Activated CD4-positive, alpha-beta T cell treated with anti-CD3 and anti-CD28 coated beads for 36 hours (primary cell): ENCODE measurements at regions of chr11 and their contacts with region 1.

Region 1: DNA sequence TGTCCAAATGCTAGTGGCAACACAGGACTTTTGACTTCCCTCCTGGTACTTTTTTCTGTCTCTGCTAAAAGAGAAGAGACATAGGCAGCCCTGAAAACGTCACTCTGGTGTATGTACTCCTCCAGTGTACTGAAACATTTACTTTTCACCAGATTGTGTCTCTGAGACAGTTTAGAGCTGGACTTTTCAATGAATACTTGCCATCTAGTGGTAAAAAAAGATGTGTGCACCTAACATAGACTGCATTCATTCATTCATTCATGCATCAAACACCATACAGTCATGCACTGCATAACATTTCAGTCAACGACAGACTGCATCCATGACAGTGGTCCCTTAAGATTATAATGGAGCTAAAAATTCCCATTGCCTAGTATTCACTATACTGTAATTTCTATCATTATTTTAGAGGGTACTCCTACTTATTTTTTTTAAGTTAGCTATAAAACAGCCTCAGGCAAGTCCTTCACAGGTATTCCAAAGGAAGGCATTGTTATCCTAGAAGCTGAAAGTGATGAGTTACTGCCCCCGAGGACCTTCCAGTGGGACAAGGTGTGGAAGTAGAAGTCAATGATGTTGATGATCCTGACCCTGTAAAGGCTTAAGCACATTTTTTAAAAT is 186.2 kb downstream of the SPON1 start:
- DNase-seq: no peak
- ATAC-seq: peak; percentile 63
- H3K4me3 Mint-ChIP-seq: no peak overlapping the region
- H3K27ac Mint-ChIP-seq: no peak overlapping the region
- H3K4me1 Mint-ChIP-seq: peaks cover 10% of the 10 kb centered on the region
- H3K27me3 Mint-ChIP-seq: no peaks in the 10 kb centered on the region

Region 2: DNA sequence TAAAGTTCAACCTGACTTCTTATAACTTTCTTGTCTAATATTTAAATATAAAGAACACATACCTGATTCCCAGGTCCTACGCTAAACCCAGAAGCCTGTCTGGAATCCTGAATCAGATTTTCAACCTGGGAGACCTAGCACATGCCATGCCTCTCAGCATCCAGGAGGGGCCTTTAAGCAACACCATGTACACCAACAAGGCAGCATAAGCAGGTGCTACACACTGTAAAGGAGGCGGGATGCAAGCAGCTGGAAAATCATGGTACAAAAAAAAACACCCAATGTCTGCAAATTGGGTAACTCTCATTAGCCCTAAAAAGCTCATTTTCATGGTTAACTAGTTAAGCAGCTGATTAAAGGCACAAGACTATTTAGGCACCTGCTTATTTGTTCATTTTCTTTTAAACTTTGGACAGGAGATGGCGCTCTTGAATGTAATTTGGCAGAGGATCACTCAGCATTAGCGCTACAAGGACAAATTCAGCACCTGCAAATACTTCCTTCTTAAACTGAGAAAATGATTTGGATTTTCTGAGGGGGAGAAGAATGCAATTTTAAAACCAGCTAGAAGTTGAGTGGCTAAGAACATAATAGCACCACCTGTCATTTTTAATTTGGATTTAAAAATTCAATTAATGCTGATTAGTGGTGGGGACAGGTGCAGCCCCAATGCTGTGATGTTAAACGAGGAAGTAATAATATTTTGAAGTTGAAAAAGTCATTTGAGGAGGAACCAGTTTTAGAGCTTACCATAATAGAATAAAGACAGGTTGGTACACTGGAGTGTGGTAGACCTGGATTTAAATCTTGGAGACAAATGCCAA is 376.3 kb before region 1 on chr11:
- CTCF ChIA-PET with region 1: interaction called, 18 read pairs
- POLR2A ChIA-PET with region 1: no interaction called
- intact Hi-C with region 1: loop called (anchors 1 kb)
- DNase-seq: no peak
- ATAC-seq: peak; percentile 74
- H3K4me3 Mint-ChIP-seq: no peak overlapping the region
- H3K27ac Mint-ChIP-seq: no peak overlapping the region
- H3K4me1 Mint-ChIP-seq: no peaks in the 10 kb centered on the region
- H3K27me3 Mint-ChIP-seq: peaks cover 3% of the 10 kb centered on the region

Region 3: DNA sequence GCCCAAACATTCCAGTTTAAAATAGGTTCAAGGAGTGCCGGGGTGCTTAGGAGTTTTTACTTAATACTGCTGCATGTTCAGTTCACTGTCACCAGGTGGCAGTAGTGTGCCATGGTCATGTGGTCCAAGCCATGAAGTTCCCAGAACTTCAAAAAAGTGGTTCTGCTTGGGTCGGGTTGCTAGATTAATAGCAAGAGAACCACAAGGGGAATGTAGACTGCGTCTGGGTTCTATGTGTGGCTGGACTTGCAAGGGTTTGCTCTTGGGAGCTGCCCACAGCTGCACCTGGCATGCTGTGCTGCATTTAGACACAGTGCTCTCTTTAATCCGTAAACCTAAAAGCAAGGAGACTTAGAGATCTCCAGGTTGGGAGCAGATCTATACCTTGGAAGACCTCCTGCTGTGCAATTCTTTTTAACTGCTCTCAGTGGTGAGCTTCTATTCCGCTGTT is 192.8 kb before region 1 on chr11:
- CTCF ChIA-PET with region 1: interaction called, 72 read pairs
- POLR2A ChIA-PET with region 1: no interaction called
- intact Hi-C with region 1: loop called (anchors 1 kb)
- DNase-seq: peak; percentile 71
- ATAC-seq: peak; percentile 58
- H3K4me3 Mint-ChIP-seq: no peak overlapping the region
- H3K27ac Mint-ChIP-seq: no peak overlapping the region
- H3K4me1 Mint-ChIP-seq: no peaks in the 10 kb centered on the region
- H3K27me3 Mint-ChIP-seq: peaks cover 13% of the 10 kb centered on the region

Region 4: GRCh38 chr11:13962562-13963168 is 186.1 kb before region 1 on chr11 and contains the start of gene SPON1:
- CTCF ChIA-PET with region 1: interaction called, 72 read pairs
- POLR2A ChIA-PET with region 1: no interaction called
- intact Hi-C with region 1: no loop called
- DNase-seq: peak; percentile 69
- ATAC-seq: peak; percentile 78
- H3K4me3 Mint-ChIP-seq: peak within 1 kb of the TSS; percentile 47
- H3K27ac Mint-ChIP-seq: no peak within 1 kb of the TSS
- H3K4me1 Mint-ChIP-seq: peaks cover 12% of the 10 kb centered on the region
- H3K27me3 Mint-ChIP-seq: peaks cover 47% of the 10 kb centered on the region
- total RNA-seq, gene SPON1: 0.26 to 0.41 TPM

Region 5: GRCh38 chr11:13970986-13971385 is 177.8 kb before region 1 on chr11:
- CTCF ChIA-PET with region 1: interaction called, 42 read pairs
- POLR2A ChIA-PET with region 1: no interaction called
- intact Hi-C with region 1: loop called in 1 of 2 experiments (anchors 1 kb)
- DNase-seq: peak; percentile 48
- ATAC-seq: no peak
- H3K4me3 Mint-ChIP-seq: no peak overlapping the region
- H3K27ac Mint-ChIP-seq: no peak overlapping the region
- H3K4me1 Mint-ChIP-seq: peaks cover 21% of the 10 kb centered on the region
- H3K27me3 Mint-ChIP-seq: peaks cover 11% of the 10 kb centered on the region

Region 6: GRCh38 chr11:14249121-14249963 is 100.6 kb after region 1 on chr11:
- CTCF ChIA-PET with region 1: interaction called, 4 read pairs
- POLR2A ChIA-PET with region 1: no interaction called
- intact Hi-C with region 1: loop called in 1 of 2 experiments (anchors 2 kb)
- DNase-seq: peak; percentile 82
- ATAC-seq: peak; percentile 73
- H3K4me3 Mint-ChIP-seq: no peak overlapping the region
- H3K27ac Mint-ChIP-seq: no peak overlapping the region
- H3K4me1 Mint-ChIP-seq: peaks cover 18% of the 10 kb centered on the region
- H3K27me3 Mint-ChIP-seq: no peaks in the 10 kb centered on the region

Region 7: GRCh38 chr11:14350215-14350614 is 201.5 kb after region 1 on chr11:
- CTCF ChIA-PET with region 1: no interaction called
- POLR2A ChIA-PET with region 1: no interaction called
- intact Hi-C with region 1: no loop called
- DNase-seq: no peak
- ATAC-seq: peak; percentile 42
- H3K4me3 Mint-ChIP-seq: no peak overlapping the region
- H3K27ac Mint-ChIP-seq: no peak overlapping the region
- H3K4me1 Mint-ChIP-seq: peaks cover 17% of the 10 kb centered on the region
- H3K27me3 Mint-ChIP-seq: no peaks in the 10 kb centered on the region